ENCODE measurements at regions of chr1 and their contacts with region 1.

Region 1: DNA sequence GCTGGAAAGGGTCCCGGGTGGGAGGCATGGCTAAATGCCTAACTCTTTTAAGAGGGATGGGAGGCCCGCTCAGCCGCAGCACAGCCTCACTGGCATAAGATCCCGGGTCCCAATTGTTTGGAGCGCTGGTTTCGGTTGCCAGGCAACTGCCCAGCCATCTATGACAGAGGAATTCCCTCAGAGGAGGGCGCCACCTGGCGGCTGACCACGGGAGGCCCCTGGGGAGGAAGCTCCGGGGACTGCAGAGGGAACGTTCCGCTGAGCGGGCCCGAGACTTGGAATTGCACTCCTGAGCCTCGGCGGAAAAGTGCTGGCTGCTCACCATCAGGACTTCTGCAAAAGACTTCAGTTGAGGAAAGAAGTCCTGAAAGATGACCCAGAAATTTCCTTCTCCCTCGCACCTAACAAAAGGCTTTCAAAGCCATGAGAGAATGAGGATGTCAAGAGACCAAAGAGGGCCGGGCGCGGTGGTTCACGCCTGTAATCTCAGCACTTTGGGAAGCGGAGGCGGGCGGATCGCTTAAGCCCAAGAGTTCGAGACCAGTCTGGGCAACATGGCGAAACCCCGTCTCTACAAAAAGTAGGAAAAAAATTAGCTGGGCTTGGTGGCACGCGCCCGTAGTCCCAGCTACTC is 1.1 kb upstream of the ELAPOR1 start:
- DNase-seq: peak; percentile 97

Region 2: GRCh38 chr1:109133815-109134214 is 21.0 kb after region 1 on chr1:
- CTCF ChIA-PET with region 1: interaction called, 24 read pairs
- POLR2A ChIA-PET with region 1: no interaction called
- DNase-seq: no peak